ENCODE measurements at regions of chr5 and their contacts with region 1.

Region 1: DNA sequence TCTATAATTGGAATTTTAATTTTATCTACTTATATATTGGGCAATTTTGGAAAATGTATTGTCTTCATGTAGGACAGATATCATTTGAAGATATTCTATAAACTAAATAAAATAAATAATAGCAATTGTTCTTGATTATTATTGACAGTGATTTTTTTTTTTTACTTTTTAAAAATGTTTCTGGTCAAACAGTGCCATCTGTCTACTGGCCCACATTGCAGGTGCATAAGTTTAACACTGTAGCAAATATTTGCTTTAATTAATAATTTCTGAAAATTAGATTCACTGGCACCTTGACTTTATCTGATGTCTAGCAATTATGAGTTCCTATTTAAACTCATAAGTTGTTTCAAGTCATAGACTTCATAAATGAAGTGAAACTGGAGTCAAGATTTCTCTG is 41.1 kb upstream of the ISOC1 start:
- DNase-seq: no peak
- H3K4me3 ChIP-seq: no peak overlapping the region
- H3K27ac ChIP-seq: no peak overlapping the region
- H3K4me1 ChIP-seq: no peaks in the 10 kb centered on the region
- H3K27me3 ChIP-seq: no peaks in the 10 kb centered on the region
- CTCF ChIP-seq: no peak
- EP300 ChIP-seq: no peak
- POLR2A ChIP-seq: no peak

Region 2: DNA sequence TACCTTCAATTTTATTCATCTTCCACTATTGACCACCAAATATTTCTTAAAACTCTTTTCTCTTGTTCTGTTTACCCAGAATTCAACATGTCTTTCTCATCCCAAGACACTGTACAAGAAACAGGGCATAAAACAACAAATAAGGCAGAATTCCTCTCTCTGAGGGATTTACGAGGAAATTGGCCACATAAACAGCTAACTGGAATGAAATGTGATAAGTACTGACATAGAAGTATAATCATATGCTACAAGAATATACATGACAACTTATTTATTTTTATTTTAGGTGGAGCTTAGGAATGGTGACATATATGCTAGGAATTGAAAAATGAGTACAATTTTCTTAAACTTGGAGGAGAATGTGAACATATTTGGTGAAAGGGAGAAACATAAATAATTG is 466.6 kb before region 1 on chr5:
- intact Hi-C with region 1: no loop called
- DNase-seq: no peak
- H3K4me3 ChIP-seq: no peak overlapping the region
- H3K27ac ChIP-seq: no peak overlapping the region
- H3K4me1 ChIP-seq: no peaks in the 10 kb centered on the region
- H3K27me3 ChIP-seq: no peaks in the 10 kb centered on the region
- CTCF ChIP-seq: no peak
- EP300 ChIP-seq: no peak
- POLR2A ChIP-seq: no peak

Region 3: DNA sequence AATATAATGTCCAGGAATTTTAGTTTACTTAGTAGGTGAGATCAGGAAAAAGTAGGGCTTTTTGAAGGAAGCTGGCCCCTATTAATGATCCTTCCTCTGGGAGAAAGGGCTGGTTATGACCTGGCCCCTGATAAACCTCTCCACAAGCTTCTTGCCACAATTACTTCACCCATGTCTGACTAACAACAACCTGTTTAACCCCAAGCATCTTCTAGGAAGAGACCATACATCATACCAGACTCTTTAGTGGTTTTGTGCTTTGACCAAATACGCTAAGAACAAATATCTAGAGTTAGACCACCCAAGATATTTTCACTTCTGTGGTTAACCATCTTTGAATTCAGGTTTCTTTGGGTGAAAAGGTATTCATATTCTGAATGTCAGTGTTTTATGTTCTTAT is 262.1 kb before region 1 on chr5:
- intact Hi-C with region 1: no loop called
- DNase-seq: no peak
- H3K4me3 ChIP-seq: no peak overlapping the region
- H3K27ac ChIP-seq: no peak overlapping the region
- H3K4me1 ChIP-seq: no peaks in the 10 kb centered on the region
- H3K27me3 ChIP-seq: no peaks in the 10 kb centered on the region
- CTCF ChIP-seq: no peak
- EP300 ChIP-seq: no peak
- POLR2A ChIP-seq: no peak

Region 4: DNA sequence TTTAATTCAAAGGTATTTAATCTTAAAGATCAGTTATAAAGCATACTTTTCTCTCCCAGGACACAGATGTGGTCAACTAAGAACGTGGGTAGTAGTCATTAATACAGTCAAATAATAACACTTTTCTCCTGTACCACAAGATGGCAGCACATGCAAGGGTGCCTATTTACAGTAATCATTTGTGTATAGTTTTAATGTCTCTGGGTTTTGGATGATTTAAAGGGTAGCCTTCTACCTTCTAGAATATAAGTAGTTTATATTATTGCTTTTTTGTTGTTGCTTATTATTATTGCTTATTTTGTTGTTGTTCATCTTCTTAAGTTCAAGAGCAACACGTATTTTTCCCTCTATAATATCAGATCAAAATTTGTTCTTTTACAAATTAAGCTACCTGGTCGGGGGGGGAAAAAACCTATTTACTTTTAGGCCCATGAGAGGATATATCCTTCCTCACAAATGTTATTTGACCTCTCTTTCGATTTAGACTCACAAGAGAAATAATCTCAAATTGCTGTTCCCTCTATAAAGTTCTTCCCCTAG is 147.8 kb before region 1 on chr5:
- intact Hi-C with region 1: loop called in 2 of 4 experiments (anchors 5 to 10 kb)
- DNase-seq: peak in 3 of 5 donors; percentile 27 to 36 (median 31)
- H3K4me3 ChIP-seq: no peak overlapping the region
- H3K27ac ChIP-seq: no peak overlapping the region
- H3K4me1 ChIP-seq: no peaks in the 10 kb centered on the region
- H3K27me3 ChIP-seq: no peaks in the 10 kb centered on the region
- CTCF ChIP-seq: peak; percentile 39 to 71 (median 53)
- EP300 ChIP-seq: no peak
- POLR2A ChIP-seq: no peak